ENCODE measurements at regions of chr3 and their contacts with region 1.

Region 1: DNA sequence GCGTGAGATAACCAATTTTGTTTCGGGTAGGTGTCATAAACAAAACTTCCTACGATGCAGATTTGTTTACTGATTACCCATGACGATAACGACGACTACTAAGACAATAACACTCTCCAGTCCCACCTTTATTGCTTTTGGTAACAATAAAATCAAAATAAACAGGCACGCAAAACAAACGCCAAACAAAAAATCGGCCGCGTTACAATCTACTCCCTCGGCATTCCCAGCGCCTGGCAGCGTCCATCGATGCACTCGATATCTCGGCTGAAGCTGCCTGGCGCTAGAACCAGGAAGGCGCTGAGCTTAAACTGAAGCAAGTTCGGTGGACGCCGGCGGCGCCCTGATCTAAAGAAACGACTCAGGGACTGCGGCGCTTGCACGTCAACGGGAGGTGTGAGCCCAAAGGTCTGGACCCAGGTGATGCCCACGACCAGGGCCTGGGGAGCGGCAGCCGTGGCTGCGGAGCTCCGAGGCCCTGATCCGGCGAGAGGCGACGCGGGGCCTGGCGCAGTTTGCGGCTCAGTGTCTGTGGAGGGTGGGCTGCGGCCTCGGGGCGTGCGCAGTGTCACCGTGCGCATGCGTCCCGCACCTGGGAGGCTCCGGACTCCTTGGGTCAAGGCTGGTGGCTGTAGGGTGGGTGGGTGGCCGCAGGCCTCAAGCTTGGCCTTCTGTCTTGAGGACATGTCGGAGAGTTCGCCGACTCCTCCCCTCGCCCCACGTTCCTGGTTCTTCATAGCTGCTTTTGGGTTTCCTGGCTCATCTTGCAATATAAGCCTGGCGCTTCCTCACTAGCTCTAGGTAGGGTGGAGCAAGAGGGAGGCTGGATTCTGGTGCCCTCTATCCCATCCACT is at the start of gene RSRC1:
- DNase-seq: peak; percentile 62 to 89 (median 70)
- ATAC-seq: peak; percentile 87
- H3K4me3 ChIP-seq: peak within 1 kb of the TSS; percentile 80
- H3K4me3 Mint-ChIP-seq: peak within 1 kb of the TSS; percentile 96
- H3K27ac ChIP-seq: no peak within 1 kb of the TSS
- H3K27ac Mint-ChIP-seq: peak within 1 kb of the TSS; percentile 72
- H3K4me1 ChIP-seq: peaks cover 35% of the 10 kb centered on the region
- H3K4me1 Mint-ChIP-seq: peaks cover 79% of the 10 kb centered on the region
- H3K27me3 ChIP-seq: peaks cover 35 to 45% of the 10 kb centered on the region in 2 experiments
- H3K27me3 Mint-ChIP-seq: peaks cover 46% of the 10 kb centered on the region
- CTCF ChIP-seq: no peak
- total RNA-seq, gene RSRC1: 22.3 to 24.6 TPM

Region 2: GRCh38 chr3:157182881-157183280 is 927.1 kb before region 1 on chr3:
- CTCF ChIA-PET with region 1: no interaction called
- POLR2A ChIA-PET with region 1: no interaction called
- intact Hi-C with region 1: loop called in 1 of 2 experiments (anchors 5 kb)
- DNase-seq: no peak
- ATAC-seq: no peak
- H3K4me3 ChIP-seq: no peak overlapping the region
- H3K4me3 Mint-ChIP-seq: no peak overlapping the region
- H3K27ac ChIP-seq: no peak overlapping the region
- H3K27ac Mint-ChIP-seq: no peak overlapping the region
- H3K4me1 ChIP-seq: no peaks in the 10 kb centered on the region
- H3K4me1 Mint-ChIP-seq: peaks cover 17% of the 10 kb centered on the region
- H3K27me3 ChIP-seq: no peaks in the 10 kb centered on the region
- H3K27me3 Mint-ChIP-seq: no peaks in the 10 kb centered on the region
- CTCF ChIP-seq: no peak

Region 3: GRCh38 chr3:158097593-158098308 is 12.3 kb before region 1 on chr3:
- CTCF ChIA-PET with region 1: interaction called, 3 read pairs
- POLR2A ChIA-PET with region 1: interaction called, 10 read pairs
- intact Hi-C with region 1: no loop called
- DNase-seq: peak in 13 of 14 experiments; percentile 43 to 89 (median 63)
- ATAC-seq: peak; percentile 96
- H3K4me3 ChIP-seq: peak overlapping the region; percentile 61
- H3K4me3 Mint-ChIP-seq: peak overlapping the region; percentile 91
- H3K27ac ChIP-seq: no peak overlapping the region
- H3K27ac Mint-ChIP-seq: peak overlapping the region; percentile 57
- H3K4me1 ChIP-seq: peaks cover 28% of the 10 kb centered on the region
- H3K4me1 Mint-ChIP-seq: peaks cover 32% of the 10 kb centered on the region
- H3K27me3 ChIP-seq: peaks cover 77 to 98% of the 10 kb centered on the region in 2 experiments
- H3K27me3 Mint-ChIP-seq: peaks cover 100% of the 10 kb centered on the region
- CTCF ChIP-seq: no peak

Region 4: DNA sequence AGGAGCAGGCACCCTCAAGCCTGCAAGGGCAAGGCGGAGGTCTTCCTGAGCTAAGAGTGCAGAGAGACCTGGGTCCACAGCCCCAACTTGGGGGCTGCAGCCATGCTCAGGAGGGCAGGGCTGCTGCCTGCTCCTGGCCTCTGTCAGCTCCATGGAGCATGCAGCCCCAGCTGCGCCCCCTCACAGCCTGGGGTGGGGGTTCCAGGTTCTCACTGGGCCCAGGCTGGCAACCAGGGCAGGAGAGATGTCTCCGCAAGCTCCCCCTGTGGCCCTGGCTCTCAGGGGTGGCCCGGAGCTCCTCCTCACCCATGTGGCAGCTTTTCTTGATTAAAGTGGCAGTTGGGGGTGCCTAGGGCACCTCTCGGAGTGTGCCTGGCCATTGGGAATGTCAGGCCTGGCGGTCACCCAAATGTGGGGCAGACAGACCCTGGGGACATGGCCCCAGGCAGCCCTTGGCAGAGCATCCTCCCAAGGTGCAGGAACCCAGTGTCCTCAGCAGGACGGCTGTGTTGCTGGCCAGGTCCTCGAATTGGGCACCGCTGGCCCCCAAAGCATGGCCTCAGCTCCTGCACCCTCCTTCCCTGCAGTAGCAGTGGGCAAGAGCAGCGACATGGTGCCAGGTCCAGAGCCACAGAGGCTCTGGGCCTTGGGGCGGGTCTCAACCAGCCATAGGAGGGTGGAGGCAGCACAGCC is 250.9 kb after region 1 on chr3:
- CTCF ChIA-PET with region 1: no interaction called
- POLR2A ChIA-PET with region 1: no interaction called
- intact Hi-C with region 1: no loop called
- DNase-seq: no peak
- ATAC-seq: no peak
- H3K4me3 ChIP-seq: no peak overlapping the region
- H3K4me3 Mint-ChIP-seq: no peak overlapping the region
- H3K27ac ChIP-seq: no peak overlapping the region
- H3K27ac Mint-ChIP-seq: no peak overlapping the region
- H3K4me1 ChIP-seq: no peaks in the 10 kb centered on the region
- H3K4me1 Mint-ChIP-seq: no peaks in the 10 kb centered on the region
- H3K27me3 ChIP-seq: no peaks in the 10 kb centered on the region
- H3K27me3 Mint-ChIP-seq: no peaks in the 10 kb centered on the region
- CTCF ChIP-seq: no peak

Region 5: GRCh38 chr3:158649791-158650190 is 539.8 kb after region 1 on chr3:
- CTCF ChIA-PET with region 1: no interaction called
- POLR2A ChIA-PET with region 1: interaction called, 7 read pairs
- intact Hi-C with region 1: loop called in 1 of 2 experiments (anchors 5 kb)
- DNase-seq: no peak
- ATAC-seq: no peak
- H3K4me3 ChIP-seq: no peak overlapping the region
- H3K4me3 Mint-ChIP-seq: no peak overlapping the region
- H3K27ac ChIP-seq: no peak overlapping the region
- H3K27ac Mint-ChIP-seq: no peak overlapping the region
- H3K4me1 ChIP-seq: peaks cover 3% of the 10 kb centered on the region
- H3K4me1 Mint-ChIP-seq: peaks cover 40% of the 10 kb centered on the region
- H3K27me3 ChIP-seq: no peaks in the 10 kb centered on the region
- H3K27me3 Mint-ChIP-seq: no peaks in the 10 kb centered on the region
- CTCF ChIP-seq: no peak